ENCODE measurements at regions of chr10 and their contacts with region 1.

Region 1: DNA sequence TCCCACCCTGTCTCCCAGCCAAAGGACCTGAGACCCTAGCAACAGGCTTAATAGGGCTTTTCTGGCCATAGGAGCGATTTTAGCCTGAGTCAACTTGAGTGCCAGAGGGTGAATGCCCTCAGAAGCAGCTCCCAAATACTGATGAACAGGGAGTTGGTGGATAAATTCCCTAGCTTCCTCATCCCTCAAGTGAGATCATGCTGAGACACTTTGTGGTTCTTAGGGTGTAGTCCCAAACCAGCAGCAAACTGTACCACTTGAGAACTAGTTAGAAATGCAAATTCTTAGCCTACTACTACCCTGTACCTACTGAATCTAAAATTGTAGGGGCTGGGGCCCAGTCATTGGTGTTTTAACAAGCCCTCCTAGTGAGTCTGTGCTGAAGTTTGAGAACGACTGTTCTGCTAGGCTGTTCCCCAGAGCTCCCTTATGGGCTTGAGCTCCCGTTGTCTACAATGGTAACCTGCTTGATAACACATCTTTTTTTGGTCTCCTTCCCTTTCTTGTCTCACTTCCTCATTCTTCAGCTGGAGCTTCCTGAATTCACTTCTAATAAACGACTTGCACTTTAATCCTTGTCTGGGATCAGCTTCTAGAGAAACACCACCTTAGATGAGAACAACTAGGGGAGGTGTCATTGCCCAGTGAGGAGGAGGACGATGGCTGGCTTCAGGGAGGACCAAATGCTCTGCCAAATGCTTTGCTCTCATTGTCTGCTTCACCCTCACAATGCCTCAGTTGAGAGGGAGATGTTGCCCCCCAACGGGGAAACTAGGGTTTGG is 18.2 kb upstream of the CDH23 start:
- DNase-seq: no peak
- H3K4me3 ChIP-seq: no peak overlapping the region
- H3K27ac ChIP-seq: no peak overlapping the region
- H3K4me1 ChIP-seq: peaks cover 10% of the 10 kb centered on the region
- H3K27me3 ChIP-seq: no peaks in the 10 kb centered on the region
- CTCF ChIP-seq: no peak

Region 2: DNA sequence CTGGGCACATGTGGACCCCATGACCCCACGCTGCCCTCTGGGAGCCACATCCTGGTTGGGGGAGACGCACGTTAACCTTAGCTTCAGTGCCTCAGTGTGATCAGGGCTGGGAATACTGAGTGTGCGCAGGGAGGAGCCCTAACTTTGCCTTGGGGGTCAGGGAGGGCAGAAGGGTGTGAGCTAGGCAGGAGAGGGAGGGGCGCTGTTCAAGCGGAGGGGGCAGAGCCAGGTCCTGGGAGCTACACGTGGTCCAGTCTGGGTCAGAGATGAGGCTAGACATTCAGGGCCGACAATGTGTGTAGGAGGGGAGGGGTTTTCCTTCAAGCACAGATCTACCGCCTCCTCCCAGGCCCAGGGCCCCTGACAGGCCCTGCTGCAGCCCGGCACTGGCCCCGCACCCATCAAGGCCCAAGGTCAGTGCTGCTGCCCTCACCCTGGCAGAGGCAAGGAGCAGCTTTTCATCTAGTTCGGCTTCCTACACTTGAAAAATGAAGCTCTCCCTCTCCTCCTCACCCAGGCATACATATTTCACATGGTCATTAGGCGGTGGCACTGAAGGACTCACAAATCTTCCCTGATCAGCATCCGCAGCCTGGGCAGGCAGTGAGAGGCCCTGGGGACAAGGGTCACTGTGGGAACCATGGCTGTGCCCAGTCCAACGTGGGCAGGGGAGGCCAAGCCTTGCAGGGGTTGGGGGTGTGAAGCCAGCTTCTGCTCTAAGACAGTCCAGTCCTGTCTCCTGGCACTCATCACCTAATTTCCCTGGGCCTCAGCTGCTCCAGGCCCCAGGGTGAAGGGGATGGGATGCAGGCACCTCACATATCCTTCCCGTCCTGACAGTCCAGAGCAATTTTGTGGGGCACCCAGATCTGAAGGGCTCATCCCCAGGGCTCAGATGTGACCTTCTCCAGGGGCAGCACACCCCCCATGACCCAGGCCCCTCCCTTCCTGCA is 293.7 kb after region 1 on chr10:
- CTCF ChIA-PET with region 1: no interaction called
- dilution Hi-C with region 1: no loop called
- in situ Hi-C with region 1: no loop called
- intact Hi-C with region 1: no loop called
- DNase-seq: no peak
- H3K4me3 ChIP-seq: no peak overlapping the region
- H3K27ac ChIP-seq: no peak overlapping the region
- H3K4me1 ChIP-seq: no peaks in the 10 kb centered on the region
- H3K27me3 ChIP-seq: peaks cover 3% of the 10 kb centered on the region
- CTCF ChIP-seq: no peak

Region 3: DNA sequence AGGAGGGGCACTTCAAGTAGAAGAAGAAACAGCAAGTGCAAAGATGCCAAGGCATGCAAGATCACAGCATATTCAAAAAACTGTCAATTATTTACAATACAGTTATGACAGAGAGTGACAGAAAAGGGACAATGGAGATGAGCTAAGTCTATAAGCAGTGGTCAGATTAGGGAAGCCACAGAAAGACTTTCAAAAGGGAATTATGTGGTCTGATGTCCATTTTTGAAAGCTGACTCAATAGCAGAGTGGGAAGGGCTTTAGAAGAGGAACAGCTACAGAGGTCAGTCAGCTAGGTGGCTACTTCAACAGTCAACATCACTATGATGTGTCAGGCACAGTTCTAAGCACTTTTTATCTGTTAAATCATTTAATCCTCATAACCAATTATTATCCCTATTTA is 755.0 kb after region 1 on chr10:
- CTCF ChIA-PET with region 1: interaction called, 18 read pairs
- dilution Hi-C with region 1: no loop called
- in situ Hi-C with region 1: no loop called
- intact Hi-C with region 1: no loop called
- DNase-seq: peak; percentile 32
- H3K4me3 ChIP-seq: no peak overlapping the region
- H3K27ac ChIP-seq: no peak overlapping the region
- H3K4me1 ChIP-seq: peaks cover 5% of the 10 kb centered on the region
- H3K27me3 ChIP-seq: no peaks in the 10 kb centered on the region
- CTCF ChIP-seq: no peak